ENCODE measurements at regions of chr6 and their contacts with region 1.

Region 1: GRCh38 chr6:27838058-27838944 is 73.9 kb downstream of the OR2B2 start:
- DNase-seq: peak; percentile 98
- H3K4me3 ChIP-seq: peak overlapping the region; percentile 77
- CTCF ChIP-seq: no peak

Region 2: DNA sequence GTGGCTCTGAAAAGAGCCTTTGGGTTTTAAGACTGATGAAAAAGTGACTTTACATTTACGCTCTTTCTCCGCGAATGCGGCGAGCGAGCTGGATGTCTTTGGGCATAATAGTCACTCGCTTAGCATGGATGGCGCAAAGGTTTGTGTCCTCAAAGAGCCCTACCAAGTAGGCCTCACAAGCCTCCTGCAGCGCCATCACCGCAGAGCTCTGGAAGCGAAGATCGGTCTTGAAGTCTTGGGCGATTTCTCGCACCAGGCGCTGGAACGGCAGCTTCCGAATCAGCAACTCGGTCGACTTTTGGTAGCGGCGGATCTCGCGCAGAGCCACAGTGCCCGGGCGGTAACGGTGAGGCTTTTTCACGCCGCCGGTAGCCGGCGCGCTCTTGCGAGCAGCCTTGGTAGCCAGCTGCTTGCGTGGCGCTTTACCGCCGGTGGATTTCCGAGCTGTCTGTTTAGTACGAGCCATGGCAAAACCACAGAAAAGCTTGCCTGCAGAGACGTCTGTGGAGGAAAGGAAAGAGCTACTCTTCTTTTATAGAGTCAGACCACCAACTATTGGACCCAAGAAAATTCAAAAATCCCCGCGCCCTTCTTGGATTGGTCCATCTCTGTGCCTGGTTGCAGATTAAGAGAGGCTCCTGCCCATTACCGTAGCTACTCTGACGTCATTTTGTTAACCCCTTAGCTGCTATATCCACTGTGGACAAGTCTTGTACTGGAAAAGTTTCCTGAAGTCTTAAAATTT is 1806.5 kb before region 1 on chr6:
- CTCF ChIA-PET with region 1: interaction called, 5 read pairs
- POLR2A ChIA-PET with region 1: interaction called, 13 read pairs
- DNase-seq: no peak
- H3K4me3 ChIP-seq: peak overlapping the region; percentile 69
- CTCF ChIP-seq: peak; percentile 20

Region 3: DNA sequence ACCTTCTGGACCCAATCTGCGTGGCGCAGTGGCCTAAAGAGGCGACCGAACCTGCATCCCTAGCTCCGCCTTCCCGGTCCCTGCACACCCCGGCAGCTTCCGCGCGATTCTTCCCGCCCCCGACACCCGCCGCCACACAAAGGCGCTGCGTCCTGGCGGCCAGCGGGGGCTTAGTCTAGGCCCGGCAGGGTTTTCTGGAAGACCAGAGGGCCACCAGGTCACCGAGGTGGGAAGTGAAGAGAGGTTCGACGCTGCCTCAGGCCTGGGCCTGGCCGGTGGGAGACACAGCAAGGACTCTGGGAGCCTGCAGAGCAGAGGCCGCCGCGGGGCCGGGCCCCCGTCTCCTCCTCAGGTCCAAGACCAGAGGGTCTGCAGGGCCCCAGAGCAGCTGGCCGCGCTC is 81.0 kb before region 1 on chr6:
- CTCF ChIA-PET with region 1: no interaction called
- POLR2A ChIA-PET with region 1: no interaction called
- DNase-seq: no peak
- H3K4me3 ChIP-seq: peak overlapping the region; percentile 48
- CTCF ChIP-seq: no peak

Region 4: DNA sequence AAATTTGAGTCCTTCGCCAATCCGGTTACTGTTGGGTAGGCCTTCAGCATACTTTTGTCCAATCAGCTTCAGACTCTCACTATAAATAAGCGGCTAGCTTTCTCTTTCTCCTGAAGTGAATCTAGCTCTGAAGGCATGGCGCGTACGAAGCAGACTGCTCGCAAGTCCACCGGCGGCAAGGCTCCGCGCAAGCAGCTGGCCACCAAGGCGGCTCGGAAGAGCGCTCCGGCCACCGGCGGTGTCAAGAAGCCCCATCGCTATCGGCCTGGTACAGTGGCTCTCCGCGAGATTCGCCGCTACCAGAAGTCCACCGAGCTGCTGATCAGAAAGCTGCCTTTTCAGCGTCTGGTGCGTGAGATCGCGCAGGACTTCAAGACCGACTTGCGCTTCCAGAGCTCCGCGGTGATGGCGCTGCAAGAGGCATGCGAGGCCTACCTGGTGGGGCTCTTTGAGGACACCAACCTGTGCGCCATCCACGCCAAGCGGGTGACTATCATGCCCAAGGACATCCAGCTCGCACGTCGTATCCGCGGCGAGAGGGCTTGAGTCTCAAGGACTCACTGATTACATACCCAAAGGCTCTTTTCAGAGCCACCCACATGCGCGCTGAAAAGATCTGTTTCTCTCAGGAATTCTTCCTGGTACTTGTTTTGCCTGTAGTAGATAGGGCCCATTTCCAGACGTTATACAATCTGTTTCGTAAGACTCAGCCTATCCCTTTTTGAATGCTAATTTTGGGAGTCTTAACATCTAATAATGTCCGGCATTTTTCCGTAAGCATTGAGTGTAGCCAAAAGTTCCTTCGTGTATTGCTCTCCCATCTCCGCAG is 28.1 kb before region 1 on chr6:
- CTCF ChIA-PET with region 1: interaction called, 3 read pairs
- POLR2A ChIA-PET with region 1: interaction called, 25 read pairs
- DNase-seq: peak; percentile 91
- H3K4me3 ChIP-seq: peak overlapping the region; percentile 85
- CTCF ChIP-seq: peak; percentile 29

Region 5: DNA sequence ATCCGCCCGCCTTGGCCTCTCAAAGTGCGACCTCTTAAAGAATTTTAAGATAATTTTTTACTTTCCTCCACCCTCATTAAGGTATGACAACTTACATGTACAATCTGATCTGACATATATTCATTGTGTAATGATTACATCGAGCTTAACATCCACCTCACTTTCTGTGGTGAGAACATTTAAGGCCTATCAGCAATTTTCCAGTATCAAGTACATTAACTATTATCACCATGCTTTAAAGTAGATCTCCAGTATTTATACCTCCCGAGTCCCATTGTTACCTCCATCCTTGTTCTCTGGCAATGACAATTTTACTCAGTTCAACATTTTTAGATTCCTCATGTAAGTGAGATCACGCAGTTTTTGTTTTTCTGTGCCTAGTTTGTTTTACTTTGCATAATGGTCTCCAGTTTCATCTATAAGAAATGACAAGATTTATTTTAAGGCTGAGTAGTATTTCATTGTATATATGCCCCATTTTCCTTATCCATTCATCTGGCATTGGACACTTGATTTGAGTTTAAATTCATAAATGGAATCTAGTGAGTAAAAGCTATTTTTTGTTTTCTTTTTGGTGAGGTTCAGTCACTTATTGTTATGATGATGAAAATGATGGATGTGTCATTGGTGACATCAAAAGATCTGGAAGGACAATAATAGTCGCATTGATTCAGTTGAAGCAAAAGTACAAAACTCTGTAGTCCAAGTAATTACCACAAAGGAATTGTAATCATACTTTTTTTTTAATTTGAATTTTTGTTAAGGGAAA is 13.1 kb before region 1 on chr6:
- CTCF ChIA-PET with region 1: interaction called, 9 read pairs
- POLR2A ChIA-PET with region 1: interaction called, 34 read pairs
- DNase-seq: no peak
- H3K4me3 ChIP-seq: peak overlapping the region; percentile 66
- CTCF ChIP-seq: no peak

Region 6: GRCh38 chr6:27864906-27865849 is 26.9 kb after region 1 on chr6:
- CTCF ChIA-PET with region 1: interaction called, 13 read pairs
- POLR2A ChIA-PET with region 1: interaction called, 160 read pairs
- DNase-seq: peak; percentile 89
- H3K4me3 ChIP-seq: peak overlapping the region; percentile 80
- CTCF ChIP-seq: no peak

Region 7: DNA sequence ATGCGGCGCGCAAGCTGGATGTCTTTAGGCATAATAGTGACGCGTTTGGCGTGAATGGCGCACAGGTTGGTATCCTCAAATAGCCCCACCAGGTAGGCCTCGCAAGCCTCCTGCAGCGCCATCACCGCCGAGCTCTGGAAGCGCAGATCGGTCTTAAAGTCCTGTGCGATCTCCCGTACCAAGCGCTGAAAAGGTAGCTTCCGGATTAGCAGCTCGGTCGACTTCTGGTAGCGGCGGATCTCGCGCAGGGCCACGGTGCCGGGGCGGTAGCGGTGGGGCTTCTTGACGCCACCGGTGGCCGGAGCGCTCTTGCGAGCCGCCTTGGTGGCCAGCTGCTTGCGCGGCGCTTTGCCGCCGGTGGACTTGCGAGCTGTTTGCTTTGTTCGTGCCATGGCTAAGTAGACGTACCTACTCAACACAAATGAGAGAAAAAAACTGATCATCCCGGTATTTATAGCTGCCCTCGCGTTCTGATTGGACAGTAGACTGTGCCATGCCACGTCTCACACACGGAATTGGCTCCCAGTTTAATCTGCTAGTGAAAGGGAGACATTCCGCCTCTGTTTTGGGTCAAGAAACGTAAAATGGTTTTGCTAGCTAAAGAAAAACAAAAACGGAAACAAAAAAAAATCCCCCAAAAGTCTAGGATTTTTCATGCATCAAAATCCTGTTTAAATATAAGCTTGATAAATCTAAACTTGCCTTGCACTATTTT is 33.8 kb after region 1 on chr6:
- CTCF ChIA-PET with region 1: interaction called, 13 read pairs
- POLR2A ChIA-PET with region 1: interaction called, 160 read pairs
- DNase-seq: peak; percentile 88
- H3K4me3 ChIP-seq: peak overlapping the region; percentile 66
- CTCF ChIP-seq: peak; percentile 36

Measured in AG04449 (cell line).